Activated T-helper 2 cell treated with anti-CD3 and anti-CD28 coated beads, Interferon-gamma antibody, Interleukin-2, Interleukin-4, amounts not matched to agents 10 μg/mL and 5 μg/mL and 100 μg/mL, durations not matched to agents 14 hours and 24 hours and 36 hours (primary cell): ENCODE measurements at regions of chr3 and their contacts with region 1.

Region 1: GRCh38 chr3:110814170-110815007 is 257.2 kb upstream of the NECTIN3 start:
- DNase-seq: peak; percentile 35
- H3K4me3 Mint-ChIP-seq: peak overlapping the region; percentile 43
- H3K27ac Mint-ChIP-seq: peak overlapping the region; percentile 91
- H3K4me1 Mint-ChIP-seq: peaks cover 29% of the 10 kb centered on the region
- H3K27me3 Mint-ChIP-seq: peaks cover 26% of the 10 kb centered on the region

Region 2: GRCh38 chr3:111071257-111072015 is 257.0 kb after region 1 on chr3 and contains the start of gene NECTIN3:
- intact Hi-C with region 1: loop called (anchors 1 kb)
- DNase-seq: peak; percentile 70
- H3K4me3 Mint-ChIP-seq: peak within 1 kb of the TSS; percentile 87
- H3K27ac Mint-ChIP-seq: peak within 1 kb of the TSS; percentile 58
- H3K4me1 Mint-ChIP-seq: peaks cover 23% of the 10 kb centered on the region
- H3K27me3 Mint-ChIP-seq: peaks cover 69% of the 10 kb centered on the region
- total RNA-seq, gene NECTIN3: 2.2 and 2.6 TPM in 2 replicates

Region 3: DNA sequence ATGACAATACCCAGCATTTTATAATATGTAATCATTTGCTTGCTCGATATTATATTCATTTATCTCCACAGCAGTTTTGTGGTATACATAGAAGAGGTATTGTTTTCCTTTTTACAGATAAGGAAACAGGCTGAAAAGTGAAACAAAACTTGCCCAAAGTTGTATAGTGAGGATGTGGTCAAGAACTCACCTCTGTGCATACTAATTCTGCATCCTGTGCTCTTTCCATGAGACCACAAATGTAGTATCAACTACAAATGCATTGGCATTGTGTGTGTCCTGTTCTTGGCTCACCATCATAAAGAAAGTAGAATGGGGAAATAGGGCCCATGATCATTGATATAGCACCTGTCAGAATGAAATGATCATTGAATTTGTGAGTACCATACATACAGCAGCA is 424.5 kb after region 1 on chr3:
- intact Hi-C with region 1: loop called (anchors 1 kb)
- DNase-seq: peak; percentile 40
- H3K4me3 Mint-ChIP-seq: no peak overlapping the region
- H3K27ac Mint-ChIP-seq: no peak overlapping the region
- H3K4me1 Mint-ChIP-seq: peaks cover 26% of the 10 kb centered on the region
- H3K27me3 Mint-ChIP-seq: peaks cover 6% of the 10 kb centered on the region

Region 4: GRCh38 chr3:111260878-111261277 is 446.5 kb after region 1 on chr3:
- intact Hi-C with region 1: loop called (anchors 2 kb)
- DNase-seq: no peak
- H3K4me3 Mint-ChIP-seq: no peak overlapping the region
- H3K27ac Mint-ChIP-seq: no peak overlapping the region
- H3K4me1 Mint-ChIP-seq: peaks cover 17% of the 10 kb centered on the region
- H3K27me3 Mint-ChIP-seq: peaks cover 58% of the 10 kb centered on the region

Region 5: DNA sequence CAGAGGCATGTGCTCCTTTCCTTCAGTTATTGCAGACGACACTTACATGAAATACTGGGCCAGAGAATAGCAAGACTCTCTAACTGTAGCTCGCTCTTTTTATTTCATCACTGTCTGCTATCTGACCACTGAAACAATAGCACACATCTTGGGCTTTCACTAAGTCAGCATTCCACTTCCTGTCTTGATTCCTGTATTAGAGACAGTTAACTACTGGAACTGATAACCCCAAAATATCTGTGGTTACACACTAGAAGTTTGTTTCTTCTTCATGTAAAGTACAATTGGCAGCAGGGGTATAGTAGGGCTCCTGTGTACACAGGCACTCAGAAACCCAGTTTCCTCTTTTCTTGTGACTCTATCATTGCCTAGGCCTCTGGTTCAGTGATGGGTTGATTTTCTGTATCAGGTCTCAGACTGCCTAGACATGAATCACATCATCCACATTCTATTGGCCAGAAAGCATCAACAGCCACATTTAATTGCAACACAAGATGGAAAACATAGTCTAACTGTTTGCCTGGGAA is 497.4 kb after region 1 on chr3:
- intact Hi-C with region 1: loop called (anchors 1 kb)
- DNase-seq: no peak
- H3K4me3 Mint-ChIP-seq: peak overlapping the region; percentile 18
- H3K27ac Mint-ChIP-seq: peak overlapping the region; percentile 77
- H3K4me1 Mint-ChIP-seq: peaks cover 39% of the 10 kb centered on the region
- H3K27me3 Mint-ChIP-seq: no peaks in the 10 kb centered on the region

Region 6: DNA sequence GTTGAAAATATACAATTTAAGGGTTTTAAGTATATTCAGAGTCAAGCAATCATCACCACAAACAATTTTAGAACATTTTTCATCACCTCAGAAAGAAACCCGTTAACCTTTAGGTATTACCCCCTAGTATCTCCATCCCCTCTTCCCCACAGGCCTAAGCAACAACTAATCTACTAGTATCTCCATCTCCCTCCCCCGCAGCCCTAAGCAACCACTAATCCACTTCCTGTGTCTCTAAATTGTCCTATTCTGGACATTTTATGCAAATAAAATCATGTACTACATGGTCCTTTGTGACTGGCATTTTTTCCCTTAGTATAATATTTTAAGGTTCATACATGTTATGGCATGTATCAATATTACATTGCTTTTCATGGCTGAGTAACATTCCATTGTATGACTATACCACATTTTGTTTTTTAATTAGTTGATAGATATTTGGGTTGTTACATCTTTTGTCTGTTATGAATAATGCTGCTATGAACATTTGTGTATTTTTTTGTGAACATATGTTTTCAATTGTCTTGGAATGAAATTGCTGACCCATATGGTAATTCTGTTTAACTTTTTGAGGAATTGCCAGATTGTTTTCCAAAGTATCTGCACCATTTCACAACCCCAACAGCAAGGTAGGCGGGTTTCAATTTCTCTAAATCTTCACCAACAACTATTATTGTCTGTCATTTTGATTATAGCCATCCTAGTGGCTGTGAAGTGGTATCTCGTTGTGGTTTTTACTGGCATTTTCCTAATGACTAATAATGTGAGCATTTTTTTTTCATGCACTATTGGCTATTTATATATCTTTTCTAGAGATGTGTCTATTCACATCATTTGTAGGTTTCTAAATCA is 512.0 kb after region 1 on chr3:
- intact Hi-C with region 1: loop called (anchors 5 kb)
- DNase-seq: no peak
- H3K4me3 Mint-ChIP-seq: no peak overlapping the region
- H3K27ac Mint-ChIP-seq: no peak overlapping the region
- H3K4me1 Mint-ChIP-seq: peaks cover 33% of the 10 kb centered on the region
- H3K27me3 Mint-ChIP-seq: no peaks in the 10 kb centered on the region